Endothelial cell of umbilical vein (primary cell): ENCODE measurements at regions of chr16 and their contacts with region 1.

Region 1: DNA sequence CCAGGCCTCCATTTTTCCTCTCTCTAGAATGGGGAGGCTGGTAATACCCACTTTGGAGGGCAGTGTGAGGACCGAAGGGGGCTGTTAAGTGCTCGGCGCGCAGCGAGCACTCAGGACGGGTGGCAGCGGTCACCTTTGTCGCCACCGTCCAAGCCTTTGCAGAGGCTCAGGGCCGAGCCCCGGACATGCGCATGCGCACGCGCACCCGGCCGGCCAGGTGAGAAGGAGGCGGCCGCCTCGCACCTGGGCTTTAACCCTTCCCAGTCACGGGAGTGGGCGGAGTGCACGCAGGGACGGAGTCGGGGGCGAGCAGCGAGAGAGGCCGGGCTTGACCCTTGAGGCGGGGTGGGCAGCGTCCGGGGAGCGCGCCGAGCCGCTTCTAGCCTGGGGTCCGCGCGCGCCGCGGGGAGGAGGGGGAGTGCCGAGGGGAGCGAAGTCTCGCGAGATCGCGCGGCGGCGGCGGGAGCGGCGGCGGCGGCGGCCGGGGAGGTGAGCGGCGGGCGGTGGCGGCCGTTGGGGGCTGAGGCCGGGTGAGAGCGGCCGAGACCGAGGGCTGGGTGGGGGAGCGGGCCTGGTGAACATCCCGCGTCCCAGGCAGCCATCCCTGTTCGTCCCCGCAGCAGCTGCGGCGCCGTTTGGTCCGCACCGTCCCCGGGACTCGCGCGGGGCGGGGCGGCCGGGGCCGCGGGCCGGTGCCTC is at the start of gene MRTFB:
- DNase-seq: peak; percentile 70
- H3K4me3 ChIP-seq: peak within 1 kb of the TSS; percentile 74 to 96 (median 82)
- H3K27ac ChIP-seq: peak within 1 kb of the TSS; percentile 68
- H3K4me1 ChIP-seq: peaks cover 11% of the 10 kb centered on the region
- H3K27me3 ChIP-seq: no peaks in the 10 kb centered on the region
- CTCF ChIP-seq: no peak
- POLR2A ChIP-seq: no peak
- total RNA-seq, gene MRTFB: 49.5 and 50.2 TPM in 2 replicates

Region 2: GRCh38 chr16:13935408-13935807 is 135.6 kb before region 1 on chr16:
- CTCF ChIA-PET with region 1: interaction called, 3 read pairs
- POLR2A ChIA-PET with region 1: no interaction called
- dilution Hi-C with region 1: no loop called
- intact Hi-C with region 1: loop called (anchors 2 kb)
- DNase-seq: no peak
- H3K4me3 ChIP-seq: no peak overlapping the region
- H3K27ac ChIP-seq: no peak overlapping the region
- H3K4me1 ChIP-seq: no peaks in the 10 kb centered on the region
- H3K27me3 ChIP-seq: no peaks in the 10 kb centered on the region
- CTCF ChIP-seq: peak; percentile 50 to 58
- POLR2A ChIP-seq: no peak

Region 3: DNA sequence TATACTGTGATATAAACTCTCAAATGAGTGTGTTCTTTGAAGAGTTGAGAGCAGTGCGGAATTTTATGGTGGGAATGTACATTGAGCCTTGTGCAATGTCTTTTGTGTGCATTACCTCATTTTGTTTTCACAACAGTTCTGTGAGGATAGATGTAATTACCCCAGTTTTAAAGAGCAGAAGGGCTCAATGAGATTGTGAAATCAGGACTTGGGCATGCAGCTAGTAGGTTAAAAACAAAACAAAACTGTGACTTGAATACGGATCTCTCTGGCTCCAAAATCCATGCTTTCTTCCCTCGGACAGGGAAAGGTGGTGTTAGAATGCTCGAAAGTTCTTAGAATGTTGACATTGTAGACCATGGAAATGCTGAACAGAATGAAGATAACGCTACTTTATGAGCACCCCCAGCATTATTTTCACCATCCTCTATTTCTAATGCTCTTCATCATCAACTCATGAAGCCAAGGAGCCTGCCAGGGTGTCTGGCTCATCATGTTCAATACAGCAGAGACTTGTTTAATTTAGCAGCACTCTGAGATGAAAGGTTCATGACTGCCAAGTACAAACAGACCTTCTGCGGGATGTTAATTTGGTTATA is 17.2 kb after region 1 on chr16:
- CTCF ChIA-PET with region 1: no interaction called
- POLR2A ChIA-PET with region 1: no interaction called
- dilution Hi-C with region 1: no loop called
- intact Hi-C with region 1: no loop called
- DNase-seq: no peak
- H3K4me3 ChIP-seq: no peak overlapping the region
- H3K27ac ChIP-seq: no peak overlapping the region
- H3K4me1 ChIP-seq: peaks cover 12% of the 10 kb centered on the region
- H3K27me3 ChIP-seq: no peaks in the 10 kb centered on the region
- CTCF ChIP-seq: no peak
- POLR2A ChIP-seq: no peak